Lower leg skin (tissue), 4 donors: ENCODE measurements at regions of chr2 and their contacts with region 1.

Region 1: DNA sequence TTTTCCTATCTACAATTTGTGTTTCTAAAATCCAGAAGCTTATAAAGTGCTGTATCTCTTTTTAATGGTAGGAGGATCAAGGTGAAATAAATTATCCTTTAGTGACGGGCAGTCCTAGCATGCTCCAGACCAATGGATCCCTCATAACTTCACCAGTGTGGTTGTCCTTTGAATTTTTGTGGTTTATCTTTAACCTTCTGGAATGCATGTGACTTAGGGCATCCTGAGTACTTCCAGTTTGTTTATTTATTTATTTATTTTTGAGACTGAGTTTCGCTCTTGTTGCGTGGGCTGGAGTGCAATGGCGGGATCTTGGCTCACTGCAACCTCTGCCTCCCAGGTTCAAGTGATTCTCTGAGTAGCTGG is 40.4 kb downstream of the NUP35 start:
- DNase-seq: no peak
- H3K4me3 ChIP-seq: no peak overlapping the region
- CTCF ChIP-seq: no peak
- POLR2A ChIP-seq: no peak

Region 2: GRCh38 chr2:181438261-181438660 is 1726.4 kb before region 1 on chr2:
- intact Hi-C with region 1: loop called (anchors 5 kb)
- DNase-seq: no peak
- H3K4me3 ChIP-seq: no peak overlapping the region
- CTCF ChIP-seq: no peak
- POLR2A ChIP-seq: no peak